Posterior vena cava (tissue), 2 donors: ENCODE measurements at regions of chr10 and their contacts with region 1.

Region 1: GRCh38 chr10:86585037-86585725 is 63.6 kb upstream of the WAPL start:
- DNase-seq: peak; percentile 90

Region 2: DNA sequence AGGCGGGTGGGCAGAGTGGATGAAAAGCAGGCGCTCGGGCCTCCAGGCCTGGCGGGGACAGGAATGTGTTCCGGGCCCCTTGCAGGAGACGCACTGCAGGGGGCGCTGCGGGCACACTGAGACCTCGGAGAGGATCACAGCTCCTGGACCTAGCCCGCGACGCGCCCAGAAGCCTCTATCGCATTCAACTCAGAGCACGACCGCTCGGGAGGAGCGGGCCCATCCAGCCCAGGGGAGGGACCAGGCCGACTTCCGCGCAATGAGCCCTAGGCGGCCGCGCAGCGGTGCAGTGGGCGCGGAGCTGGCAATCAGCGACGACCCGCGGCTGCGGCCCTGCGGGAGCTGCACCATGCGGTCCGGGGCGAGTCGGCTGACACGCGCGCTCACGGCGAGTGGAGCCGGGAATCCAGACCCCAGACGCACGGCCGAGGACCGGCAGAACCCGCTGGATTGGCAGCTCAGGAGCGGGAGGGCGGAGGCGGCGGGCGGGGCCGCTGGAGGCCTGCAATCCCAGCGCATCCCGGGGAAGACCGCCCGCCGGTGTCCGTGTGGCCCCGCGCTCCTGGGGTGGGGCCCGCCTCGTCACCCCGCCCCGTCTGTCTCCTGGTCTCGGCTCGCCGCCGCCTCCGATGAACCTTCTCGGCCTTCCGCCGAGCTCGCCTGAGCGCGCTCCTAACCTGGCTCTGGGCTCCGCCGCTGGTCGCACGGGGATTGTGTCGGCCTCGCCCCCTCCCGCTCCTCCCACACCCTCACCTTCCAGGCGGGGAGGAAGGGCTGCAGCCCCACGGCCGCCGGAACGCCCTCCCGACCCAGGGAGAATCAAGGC is 185.1 kb before region 1 on chr10:
- intact Hi-C with region 1: loop called (anchors 5 kb)
- DNase-seq: peak; percentile 99